Astrocyte of the cerebellum (primary cell): ENCODE measurements at regions of chr1 and their contacts with region 1.

Region 1: DNA sequence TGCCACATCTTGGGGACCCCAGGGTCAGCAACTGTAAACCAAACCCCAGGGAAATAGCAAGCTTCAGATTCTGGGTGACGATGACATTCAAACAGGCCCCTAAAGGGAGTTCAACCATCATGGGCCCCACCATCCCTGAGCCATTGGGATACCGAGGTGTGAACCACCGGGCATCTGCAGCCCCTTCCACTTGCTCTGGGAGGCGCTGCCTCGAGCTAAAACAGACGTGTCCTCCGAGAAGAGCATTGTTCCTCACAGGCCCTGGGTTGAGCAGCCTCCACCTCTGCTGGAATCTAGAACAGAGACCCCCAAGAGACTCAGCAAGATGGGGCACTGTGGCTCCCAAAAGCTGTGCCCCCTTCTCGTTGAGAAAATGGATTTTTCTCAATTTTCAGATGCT is 19.0 kb upstream of the EFHD2 start:
- DNase-seq: no peak
- H3K4me3 ChIP-seq: no peak overlapping the region
- CTCF ChIP-seq: no peak

Region 2: GRCh38 chr1:15153842-15154479 is 236.7 kb before region 1 on chr1:
- in situ Hi-C with region 1: no loop called
- DNase-seq: no peak
- H3K4me3 ChIP-seq: peak overlapping the region; percentile 50
- CTCF ChIP-seq: peak; percentile 71

Region 3: DNA sequence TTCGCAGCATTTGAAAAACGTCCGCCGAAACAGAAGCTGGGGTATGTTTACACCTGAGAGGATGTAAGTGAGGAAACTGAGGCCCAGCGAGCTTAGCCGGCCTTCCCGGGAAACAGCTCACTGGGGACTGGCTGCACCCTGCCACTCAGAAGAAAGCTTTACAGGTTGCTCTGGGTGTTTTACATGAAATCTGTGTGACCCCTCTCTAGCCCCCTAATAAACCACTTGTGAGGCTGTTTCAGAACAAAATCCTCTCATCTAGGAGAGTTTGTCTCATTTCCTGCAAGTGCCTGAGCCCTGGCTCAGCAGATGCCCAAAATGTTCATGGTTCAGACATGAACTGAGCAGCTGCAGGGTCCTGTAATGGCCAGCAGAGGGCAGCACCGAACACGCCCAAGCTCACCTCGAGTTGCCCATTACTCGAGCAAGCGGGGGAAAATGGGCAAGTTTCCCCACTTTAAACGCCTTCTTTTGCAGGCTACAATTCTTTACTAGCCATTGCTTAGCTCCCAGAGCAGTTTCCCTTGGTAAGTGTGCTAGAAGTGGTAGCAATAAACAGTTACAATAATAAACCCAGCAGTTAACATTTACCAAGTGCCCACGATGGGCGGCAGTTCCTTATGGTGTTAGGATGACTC is 67.2 kb before region 1 on chr1:
- in situ Hi-C with region 1: loop called (anchors 5 kb)
- DNase-seq: peak; percentile 76
- H3K4me3 ChIP-seq: no peak overlapping the region
- CTCF ChIP-seq: peak; percentile 95

Region 4: DNA sequence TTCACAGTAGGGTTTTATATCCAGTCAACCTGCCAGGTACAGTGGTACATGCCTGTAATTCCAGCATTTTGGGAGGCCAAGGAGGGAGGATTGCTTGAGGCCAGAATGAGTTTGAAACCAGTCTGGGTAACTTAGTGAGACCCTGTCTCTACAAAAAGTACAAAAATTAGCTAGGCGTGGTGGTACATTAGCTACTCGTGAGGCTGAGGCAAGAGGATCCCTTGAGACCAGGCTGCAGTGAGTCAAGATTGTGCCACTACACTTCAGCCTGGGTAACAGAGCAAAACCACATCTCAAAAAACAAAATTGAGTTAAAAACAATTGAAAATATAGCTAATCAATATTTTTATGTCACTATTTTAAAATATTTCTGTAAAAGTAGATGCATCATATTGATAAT is 259.8 kb after region 1 on chr1:
- in situ Hi-C with region 1: no loop called
- DNase-seq: no peak
- H3K4me3 ChIP-seq: no peak overlapping the region
- CTCF ChIP-seq: no peak